GM12878 (cell line): ENCODE measurements at regions of chr17 and their contacts with region 1.

Region 1: GRCh38 chr17:11109106-11109505 is 131.9 kb upstream of the SHISA6 start:
- DNase-seq: no peak
- ATAC-seq: no peak
- H3K4me3 ChIP-seq: no peak overlapping the region
- H3K27ac ChIP-seq: no peak overlapping the region
- H3K4me1 ChIP-seq: no peaks in the 10 kb centered on the region
- H3K27me3 ChIP-seq: no peaks in the 10 kb centered on the region
- CTCF ChIP-seq: no peak
- EP300 ChIP-seq: no peak
- POLR2A ChIP-seq: no peak
- RAD21 ChIP-seq: no peak

Region 2: DNA sequence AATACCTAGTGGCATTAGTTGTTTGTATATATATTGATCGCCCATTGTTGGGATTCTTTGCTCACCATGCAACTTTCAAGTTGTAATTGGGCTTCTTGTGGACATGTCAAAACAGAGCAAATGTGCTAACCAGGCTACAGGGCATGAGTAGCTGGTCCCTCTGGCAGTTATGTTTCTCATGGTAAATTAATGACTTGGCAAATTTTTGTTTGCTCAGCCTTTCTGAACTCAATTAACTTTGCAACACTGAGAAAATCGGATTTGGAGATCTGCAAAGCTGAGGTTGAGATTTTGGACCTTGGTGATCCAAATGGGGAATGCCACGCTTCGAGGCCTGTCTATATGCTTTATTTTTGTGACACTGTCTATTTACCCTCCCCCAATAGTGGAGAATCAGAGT is 132.7 kb before region 1 on chr17:
- CTCF ChIA-PET with region 1: no interaction called
- POLR2A ChIA-PET with region 1: no interaction called
- RAD21 ChIA-PET with region 1: no interaction called
- SMC1A ChIA-PET with region 1: no interaction called
- in situ Hi-C with region 1: no loop called
- intact Hi-C with region 1: no loop called
- DNase-seq: no peak
- ATAC-seq: no peak
- H3K4me3 ChIP-seq: no peak overlapping the region
- H3K27ac ChIP-seq: no peak overlapping the region
- H3K4me1 ChIP-seq: no peaks in the 10 kb centered on the region
- H3K27me3 ChIP-seq: no peaks in the 10 kb centered on the region
- CTCF ChIP-seq: no peak
- EP300 ChIP-seq: no peak
- POLR2A ChIP-seq: no peak
- RAD21 ChIP-seq: no peak

Region 3: DNA sequence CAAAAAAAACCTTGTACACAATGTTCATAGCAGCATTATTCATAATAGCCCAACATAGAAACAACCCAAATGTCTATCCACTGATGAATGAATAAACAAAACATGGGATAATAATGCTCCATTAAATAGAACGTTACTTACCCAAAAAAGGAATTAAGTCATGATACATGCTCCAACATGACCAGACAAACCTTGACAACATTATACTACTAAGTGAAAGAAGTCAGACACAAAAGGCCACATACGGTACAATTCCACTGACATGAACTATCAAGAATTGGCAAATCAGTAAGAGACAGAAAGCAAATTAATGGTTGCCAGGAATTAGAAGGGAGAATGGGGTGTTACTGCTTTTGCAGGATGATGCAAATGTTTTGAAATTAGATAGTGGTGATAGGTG is 61.9 kb before region 1 on chr17:
- CTCF ChIA-PET with region 1: no interaction called
- POLR2A ChIA-PET with region 1: no interaction called
- RAD21 ChIA-PET with region 1: no interaction called
- SMC1A ChIA-PET with region 1: no interaction called
- in situ Hi-C with region 1: loop called (anchors 10 kb)
- intact Hi-C with region 1: no loop called
- DNase-seq: no peak
- ATAC-seq: no peak
- H3K4me3 ChIP-seq: no peak overlapping the region
- H3K27ac ChIP-seq: no peak overlapping the region
- H3K4me1 ChIP-seq: no peaks in the 10 kb centered on the region
- H3K27me3 ChIP-seq: no peaks in the 10 kb centered on the region
- CTCF ChIP-seq: no peak
- EP300 ChIP-seq: no peak
- POLR2A ChIP-seq: no peak
- RAD21 ChIP-seq: no peak